ENCODE measurements at regions of chr3 and their contacts with region 1.

Region 1: DNA sequence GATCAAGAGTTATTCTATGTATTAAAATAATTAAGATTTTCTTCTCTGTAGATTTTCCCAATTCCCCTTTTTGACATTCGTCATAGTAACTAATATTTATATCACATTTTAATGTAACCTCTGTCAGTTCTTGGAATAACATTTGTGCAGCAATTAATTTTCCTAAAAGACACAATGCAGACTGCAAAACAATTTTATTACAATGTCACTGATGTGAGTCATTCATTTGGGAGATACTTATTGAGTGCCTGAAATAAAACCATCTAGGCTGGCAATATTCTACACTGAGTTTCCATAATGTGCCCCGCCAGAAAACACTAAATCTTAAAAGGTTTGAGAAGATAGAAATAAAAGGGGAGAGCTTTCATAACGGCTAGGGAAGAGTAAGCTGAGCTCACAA is 6.7 kb upstream of the USP13 start:
- DNase-seq: no peak
- H3K4me3 Mint-ChIP-seq: no peak overlapping the region
- H3K27ac Mint-ChIP-seq: no peak overlapping the region
- H3K4me1 Mint-ChIP-seq: peaks cover 3% of the 10 kb centered on the region
- H3K27me3 Mint-ChIP-seq: no peaks in the 10 kb centered on the region

Region 2: DNA sequence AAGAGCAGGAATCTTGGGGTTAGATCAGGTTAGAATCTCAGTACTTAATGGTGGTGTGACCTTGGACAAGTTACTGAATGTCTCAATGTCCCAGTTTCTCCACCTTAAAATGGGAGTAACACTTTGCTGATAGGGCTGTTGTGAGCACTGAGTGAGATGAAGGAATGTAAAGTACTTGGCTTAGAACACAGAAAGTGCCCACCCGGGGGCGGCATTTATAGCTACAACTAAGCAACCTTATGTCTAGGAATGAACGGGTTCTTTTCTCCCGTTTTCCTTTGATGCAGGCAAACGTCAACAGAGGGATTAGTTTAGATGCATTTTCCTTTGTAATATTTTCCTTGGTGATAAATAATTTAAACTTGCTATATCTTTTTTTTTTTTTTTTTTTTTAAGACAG is 183.2 kb after region 1 on chr3:
- CTCF ChIA-PET with region 1: no interaction called
- intact Hi-C with region 1: loop called (anchors 5 kb)
- DNase-seq: no peak
- H3K4me3 Mint-ChIP-seq: no peak overlapping the region
- H3K27ac Mint-ChIP-seq: no peak overlapping the region
- H3K4me1 Mint-ChIP-seq: no peaks in the 10 kb centered on the region
- H3K27me3 Mint-ChIP-seq: no peaks in the 10 kb centered on the region

Region 3: GRCh38 chr3:179898024-179898423 is 251.8 kb after region 1 on chr3:
- CTCF ChIA-PET with region 1: no interaction called
- intact Hi-C with region 1: no loop called
- DNase-seq: peak; percentile 10
- H3K4me3 Mint-ChIP-seq: no peak overlapping the region
- H3K27ac Mint-ChIP-seq: no peak overlapping the region
- H3K4me1 Mint-ChIP-seq: no peaks in the 10 kb centered on the region
- H3K27me3 Mint-ChIP-seq: peaks cover 3% of the 10 kb centered on the region